ENCODE measurements at regions of chr2 and their contacts with region 1.

Region 1: DNA sequence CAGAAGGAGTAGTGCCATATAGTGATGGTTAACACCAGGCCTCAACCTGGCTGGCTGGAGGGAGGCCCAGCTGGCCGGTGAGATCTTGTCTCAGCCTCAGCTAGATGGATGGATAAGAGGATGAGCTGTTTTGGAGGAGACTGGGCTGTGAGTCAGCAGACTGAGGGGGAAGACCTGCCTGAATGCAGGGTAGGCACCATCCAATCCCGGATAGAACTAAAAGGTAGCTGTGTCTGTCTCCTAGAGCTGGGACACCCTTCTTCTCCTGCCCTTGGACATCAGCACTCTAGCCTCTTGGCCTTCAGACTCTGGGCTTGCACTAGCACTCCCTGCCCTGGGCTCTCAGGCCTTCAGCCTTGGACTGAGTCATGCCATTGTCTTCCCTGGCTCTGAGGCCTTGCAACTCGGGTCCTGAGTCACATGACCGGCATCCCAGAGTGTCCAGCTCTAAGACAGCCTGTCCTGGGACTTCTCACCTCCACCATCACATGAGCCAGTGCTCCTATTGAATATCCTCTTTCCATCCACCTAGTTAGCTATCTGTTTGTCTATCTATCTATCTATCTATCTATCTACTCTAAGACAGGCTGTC is 131.3 kb downstream of the TPO start:
- DNase-seq: peak in 1 of 10 donors; percentile 39
- H3K4me3 ChIP-seq: no peak overlapping the region
- H3K27ac ChIP-seq: no peak overlapping the region
- H3K27me3 ChIP-seq: peaks cover 0 to 7% (median 0%) of the 10 kb centered on the region in 45 donors
- CTCF ChIP-seq: no peak

Region 2: DNA sequence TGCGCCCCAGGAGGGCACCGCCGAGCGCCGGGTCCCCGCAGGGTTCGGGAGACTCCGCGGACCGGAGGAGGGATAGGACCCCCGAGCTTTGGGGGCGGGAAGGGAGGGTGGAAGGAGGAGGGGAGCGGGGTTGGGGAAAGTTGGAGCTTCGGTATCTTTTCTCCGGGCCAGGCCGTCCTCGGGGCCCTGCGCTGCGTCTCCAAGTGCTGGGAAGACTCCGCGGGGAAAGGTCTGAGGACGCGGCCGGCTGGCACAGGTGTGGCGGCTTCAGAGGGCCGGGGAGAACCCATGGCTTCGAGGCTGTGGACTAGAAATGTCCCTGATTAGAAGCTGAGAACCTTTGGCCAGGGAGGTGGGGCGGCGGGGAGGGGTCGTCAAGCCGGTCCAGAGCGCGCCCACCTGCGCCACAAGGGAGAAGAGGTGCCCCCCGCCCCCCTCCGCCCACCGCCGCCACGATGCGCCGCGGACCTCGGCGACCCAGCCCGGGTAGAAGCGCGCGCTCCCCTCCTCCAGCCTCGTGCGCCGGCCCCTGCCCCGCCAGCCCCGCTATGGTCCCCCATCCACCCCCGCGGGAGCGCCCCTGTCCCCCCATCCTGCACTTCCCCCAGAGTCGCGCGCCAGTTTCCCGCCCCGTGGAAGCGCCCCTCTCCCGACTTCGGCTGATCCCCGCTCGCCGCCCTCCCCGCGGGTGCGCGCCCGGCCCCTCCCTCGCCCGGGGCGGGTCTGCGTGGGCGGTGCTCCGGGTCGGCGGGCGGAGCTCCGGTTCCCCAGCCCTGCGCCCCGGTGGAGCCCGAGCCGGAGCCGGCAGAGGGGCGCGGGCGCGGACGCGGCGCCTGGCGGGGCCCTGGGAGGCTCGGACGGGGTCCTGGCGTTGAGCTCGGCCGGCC is 594.3 kb before region 1 on chr2 and contains the start of gene SNTG2:
- intact Hi-C with region 1: loop called (anchors 2 to 10 kb)
- DNase-seq: peak in 1 of 10 donors; percentile 63
- H3K4me3 ChIP-seq: peak within 1 kb of the TSS in 57 of 59 donors; percentile 7 to 62 (median 41)
- H3K27ac ChIP-seq: no peak within 1 kb of the TSS
- H3K27me3 ChIP-seq: peaks cover 0 to 83% (median 65%) of the 10 kb centered on the region in 45 donors
- CTCF ChIP-seq: no peak
- total RNA-seq, gene SNTG2: 0.82 to 13.7 (median 3.7) TPM in 119 of 120 experiments, not detected in the other

Region 3: DNA sequence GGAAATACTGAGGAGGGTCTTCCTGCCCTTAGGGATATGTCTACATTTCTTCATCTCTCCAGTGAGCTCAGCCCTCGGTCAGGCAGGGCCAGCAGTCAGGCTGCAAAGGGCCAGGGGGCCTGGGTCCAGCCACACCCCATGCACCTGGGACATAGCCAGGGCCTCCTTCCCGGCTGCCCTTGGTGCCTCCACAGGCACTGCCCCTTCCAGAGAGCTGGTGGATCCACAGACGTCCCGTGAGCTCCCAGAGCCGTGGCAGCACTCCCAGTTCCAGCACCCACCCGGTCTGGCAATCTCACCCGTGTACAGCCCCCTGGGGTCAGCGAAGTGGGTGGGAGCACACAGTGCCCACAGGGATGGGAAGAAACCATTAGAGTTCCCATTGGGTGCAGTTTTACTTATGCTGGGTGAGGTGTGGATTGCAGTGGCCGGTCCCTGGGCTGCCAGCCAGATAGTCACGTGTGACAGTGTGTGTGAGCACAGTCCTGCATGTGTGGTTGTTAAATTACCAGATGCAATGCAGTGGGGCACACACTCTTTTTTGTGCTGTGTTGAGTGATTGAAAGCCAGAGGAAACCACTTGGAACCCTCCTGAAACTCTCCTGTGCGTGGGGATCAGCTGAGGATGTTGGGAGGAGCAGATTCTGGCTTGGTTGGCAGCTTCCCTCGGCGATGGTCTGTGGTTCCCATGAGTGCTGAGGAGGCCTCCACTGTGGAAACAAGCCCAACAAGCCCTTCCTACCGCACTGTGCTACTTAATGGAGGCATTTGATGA is 462.9 kb before region 1 on chr2:
- intact Hi-C with region 1: no loop called
- DNase-seq: peak in 1 of 10 donors; percentile 21
- H3K4me3 ChIP-seq: no peak overlapping the region
- H3K27ac ChIP-seq: no peak overlapping the region
- H3K27me3 ChIP-seq: peaks cover 0 to 18% (median 3%) of the 10 kb centered on the region in 45 donors
- CTCF ChIP-seq: no peak

Region 4: DNA sequence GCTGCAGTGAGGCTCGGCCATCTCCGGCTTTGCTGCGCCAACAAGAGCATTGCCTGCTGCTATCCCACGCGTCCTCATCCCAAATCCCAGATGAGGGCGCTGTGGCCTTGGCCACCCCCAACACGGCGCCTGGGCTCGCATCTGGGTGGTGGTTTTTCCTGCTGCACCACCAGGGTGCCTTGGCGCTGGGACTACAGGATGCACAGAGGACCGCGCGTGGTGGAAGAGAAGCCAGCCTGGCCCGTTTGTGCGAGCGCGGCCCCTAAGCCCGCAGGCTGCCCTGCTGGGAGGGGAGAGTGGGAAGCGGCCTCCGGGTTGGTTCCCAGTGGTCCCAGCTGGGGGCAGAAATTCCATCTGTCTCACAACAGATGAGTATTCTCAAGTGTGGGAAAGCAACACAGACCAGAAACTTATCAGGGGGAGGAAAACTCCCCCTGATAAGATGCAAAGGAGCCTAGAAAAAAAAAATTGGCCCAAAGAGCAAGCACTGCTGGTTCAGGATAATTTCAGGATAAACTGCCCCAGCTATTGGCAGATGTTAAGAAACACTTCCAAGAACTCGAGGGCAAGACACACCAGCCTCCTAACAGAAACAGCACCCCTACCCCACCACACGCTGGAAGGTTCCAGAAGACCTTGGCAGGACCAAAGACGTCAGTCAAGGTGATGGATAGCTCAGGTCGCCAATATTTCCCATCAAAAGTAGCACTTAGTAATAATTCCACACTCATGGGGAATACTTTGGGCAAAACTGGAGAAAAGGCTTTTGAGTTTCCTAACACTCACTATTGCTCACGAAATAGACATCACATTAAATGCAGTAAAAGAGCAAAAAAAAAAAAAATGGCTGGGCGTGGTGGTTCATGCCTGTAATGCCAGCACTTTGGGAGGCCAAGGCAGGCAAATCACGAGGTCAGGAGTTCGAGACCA is 47.7 kb after region 1 on chr2:
- intact Hi-C with region 1: no loop called
- DNase-seq: peak in 8 of 10 donors; percentile 24 to 61 (median 54)
- H3K4me3 ChIP-seq: peak overlapping the region in 4 of 59 donors; percentile 5 to 36 (median 26)
- H3K27ac ChIP-seq: no peak overlapping the region
- H3K27me3 ChIP-seq: peaks cover 0 to 36% (median 8%) of the 10 kb centered on the region in 45 donors
- CTCF ChIP-seq: peak in 52 of 56 donors; percentile 17 to 62 (median 42)

Measured in dorsolateral prefrontal cortex (tissue), 120 donors.